ENCODE measurements at regions of chr1 and their contacts with region 1.

Region 1: GRCh38 chr1:40267767-40268187 is 9.7 kb downstream of the ZMPSTE24 start:
- DNase-seq: no peak
- H3K4me3 Mint-ChIP-seq: no peak overlapping the region
- H3K27ac Mint-ChIP-seq: no peak overlapping the region
- H3K4me1 Mint-ChIP-seq: peaks cover 44% of the 10 kb centered on the region
- H3K27me3 Mint-ChIP-seq: no peaks in the 10 kb centered on the region

Region 2: GRCh38 chr1:40185951-40186864 is 81.6 kb before region 1 on chr1:
- intact Hi-C with region 1: loop called (anchors 5 kb)
- DNase-seq: peak; percentile 51
- H3K4me3 Mint-ChIP-seq: peak overlapping the region; percentile 9
- H3K27ac Mint-ChIP-seq: peak overlapping the region; percentile 75
- H3K4me1 Mint-ChIP-seq: peaks cover 63% of the 10 kb centered on the region
- H3K27me3 Mint-ChIP-seq: no peaks in the 10 kb centered on the region

Region 3: DNA sequence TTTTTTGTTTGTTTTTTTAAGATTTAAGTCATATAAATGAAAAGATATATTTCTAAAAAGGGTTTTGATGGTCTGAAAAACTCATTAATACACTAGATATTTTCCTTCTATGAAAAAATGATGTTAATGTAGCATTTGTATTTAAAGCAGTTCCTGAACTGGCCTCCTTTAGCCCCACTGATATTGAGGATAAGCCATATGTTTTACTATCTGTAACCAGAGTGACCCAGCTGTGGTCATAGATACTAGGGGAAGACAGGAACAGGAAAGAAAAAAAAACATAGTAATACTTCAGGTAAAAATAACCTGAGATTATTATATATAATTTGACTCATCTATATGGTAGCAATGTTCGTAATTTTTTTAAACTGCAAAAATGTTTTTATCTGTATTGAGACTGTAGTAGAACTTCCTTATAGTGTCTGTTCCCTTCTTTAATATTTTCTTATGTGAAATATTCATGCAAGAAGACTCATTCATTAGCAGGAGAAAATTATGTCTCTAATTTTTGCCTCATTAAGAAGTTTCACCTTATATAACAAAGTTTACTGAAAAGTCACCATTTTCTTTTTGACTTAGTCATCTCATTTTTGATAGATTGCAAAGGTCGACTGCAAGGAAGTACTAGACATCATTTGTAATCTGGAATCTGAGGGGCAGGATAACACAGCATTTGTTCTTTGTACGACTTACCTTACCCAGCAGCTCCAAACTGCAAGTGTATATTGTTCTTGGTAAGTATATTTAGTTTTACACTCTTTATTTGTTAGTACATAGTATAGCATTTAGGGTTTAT is 45.6 kb before region 1 on chr1:
- intact Hi-C with region 1: loop called (anchors 2 kb)
- DNase-seq: no peak
- H3K4me3 Mint-ChIP-seq: no peak overlapping the region
- H3K27ac Mint-ChIP-seq: no peak overlapping the region
- H3K4me1 Mint-ChIP-seq: peaks cover 27% of the 10 kb centered on the region
- H3K27me3 Mint-ChIP-seq: no peaks in the 10 kb centered on the region

Region 4: DNA sequence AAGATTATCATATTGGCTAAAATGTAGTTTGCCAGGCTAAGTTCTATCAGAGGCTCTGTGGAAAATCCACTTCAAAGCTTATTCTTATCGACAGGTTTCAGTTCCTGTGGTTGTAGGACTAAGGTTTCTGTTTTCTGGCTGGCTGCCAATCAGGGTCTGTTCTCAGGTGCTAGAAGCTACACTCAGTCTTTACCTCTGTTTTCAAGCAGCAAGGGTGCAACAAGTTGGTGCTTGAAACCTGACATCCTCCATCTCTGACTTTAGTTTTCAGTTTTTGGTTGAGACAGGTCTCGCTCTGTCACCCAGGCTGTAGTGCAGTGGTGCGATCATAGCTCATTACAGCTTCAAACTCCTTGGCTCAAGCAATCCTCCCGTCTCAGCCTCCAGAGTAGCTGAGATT is 35.3 kb before region 1 on chr1:
- intact Hi-C with region 1: loop called (anchors 1 kb)
- DNase-seq: peak; percentile 80
- H3K4me3 Mint-ChIP-seq: no peak overlapping the region
- H3K27ac Mint-ChIP-seq: peak overlapping the region; percentile 58
- H3K4me1 Mint-ChIP-seq: peaks cover 44% of the 10 kb centered on the region
- H3K27me3 Mint-ChIP-seq: no peaks in the 10 kb centered on the region

Region 5: DNA sequence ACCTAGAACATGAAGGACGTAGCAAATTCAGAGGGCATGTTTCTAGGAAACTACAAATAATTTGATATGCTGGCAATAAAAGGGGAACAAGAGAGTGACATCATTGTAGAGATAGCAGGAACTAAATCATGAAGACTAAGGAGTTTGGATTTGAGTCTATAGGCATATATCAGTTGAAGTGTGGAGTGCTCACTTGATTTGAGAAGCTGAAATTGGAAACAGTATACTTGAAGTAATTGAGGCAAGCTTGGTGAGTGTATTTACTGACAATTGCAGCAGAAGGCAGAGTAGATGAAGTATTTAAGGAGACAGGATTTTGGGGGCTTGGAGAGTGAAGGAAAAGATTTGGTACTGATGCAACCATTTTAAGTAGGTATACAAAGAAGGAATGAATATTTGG is 26.4 kb before region 1 on chr1:
- intact Hi-C with region 1: loop called (anchors 1 kb)
- DNase-seq: no peak
- H3K4me3 Mint-ChIP-seq: peak overlapping the region; percentile 59
- H3K27ac Mint-ChIP-seq: peak overlapping the region; percentile 83
- H3K4me1 Mint-ChIP-seq: peaks cover 59% of the 10 kb centered on the region
- H3K27me3 Mint-ChIP-seq: no peaks in the 10 kb centered on the region

Region 6: GRCh38 chr1:40252601-40253000 is 15.2 kb before region 1 on chr1:
- intact Hi-C with region 1: no loop called
- DNase-seq: no peak
- H3K4me3 Mint-ChIP-seq: no peak overlapping the region
- H3K27ac Mint-ChIP-seq: no peak overlapping the region
- H3K4me1 Mint-ChIP-seq: peaks cover 29% of the 10 kb centered on the region
- H3K27me3 Mint-ChIP-seq: no peaks in the 10 kb centered on the region

Region 7: GRCh38 chr1:40281853-40282252 is 14.1 kb after region 1 on chr1:
- intact Hi-C with region 1: no loop called
- DNase-seq: no peak
- H3K4me3 Mint-ChIP-seq: no peak overlapping the region
- H3K27ac Mint-ChIP-seq: peak overlapping the region; percentile 71
- H3K4me1 Mint-ChIP-seq: no peaks in the 10 kb centered on the region
- H3K27me3 Mint-ChIP-seq: no peaks in the 10 kb centered on the region

Region 8: DNA sequence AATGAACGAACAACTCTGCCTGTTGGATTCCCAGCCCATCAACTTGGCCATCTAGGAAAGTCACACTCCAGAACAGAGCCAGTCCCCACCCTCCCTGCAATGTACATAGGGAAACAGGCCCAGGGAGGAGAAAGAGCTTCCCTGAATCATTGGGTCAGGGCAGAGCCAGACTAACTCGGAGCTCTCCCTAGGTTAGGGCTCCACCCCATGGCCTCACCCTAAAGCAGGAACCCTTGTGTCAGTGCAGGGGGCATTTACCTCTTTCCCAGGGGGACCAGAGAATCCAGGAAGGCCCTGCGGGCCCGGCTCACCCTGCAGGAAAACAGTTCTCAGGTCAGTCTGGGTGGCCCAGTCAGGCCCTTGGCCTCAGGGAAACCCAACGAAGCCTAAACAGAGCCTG is 37.7 kb after region 1 on chr1:
- intact Hi-C with region 1: no loop called
- DNase-seq: no peak
- H3K4me3 Mint-ChIP-seq: no peak overlapping the region
- H3K27ac Mint-ChIP-seq: no peak overlapping the region
- H3K4me1 Mint-ChIP-seq: no peaks in the 10 kb centered on the region
- H3K27me3 Mint-ChIP-seq: no peaks in the 10 kb centered on the region

Region 9: DNA sequence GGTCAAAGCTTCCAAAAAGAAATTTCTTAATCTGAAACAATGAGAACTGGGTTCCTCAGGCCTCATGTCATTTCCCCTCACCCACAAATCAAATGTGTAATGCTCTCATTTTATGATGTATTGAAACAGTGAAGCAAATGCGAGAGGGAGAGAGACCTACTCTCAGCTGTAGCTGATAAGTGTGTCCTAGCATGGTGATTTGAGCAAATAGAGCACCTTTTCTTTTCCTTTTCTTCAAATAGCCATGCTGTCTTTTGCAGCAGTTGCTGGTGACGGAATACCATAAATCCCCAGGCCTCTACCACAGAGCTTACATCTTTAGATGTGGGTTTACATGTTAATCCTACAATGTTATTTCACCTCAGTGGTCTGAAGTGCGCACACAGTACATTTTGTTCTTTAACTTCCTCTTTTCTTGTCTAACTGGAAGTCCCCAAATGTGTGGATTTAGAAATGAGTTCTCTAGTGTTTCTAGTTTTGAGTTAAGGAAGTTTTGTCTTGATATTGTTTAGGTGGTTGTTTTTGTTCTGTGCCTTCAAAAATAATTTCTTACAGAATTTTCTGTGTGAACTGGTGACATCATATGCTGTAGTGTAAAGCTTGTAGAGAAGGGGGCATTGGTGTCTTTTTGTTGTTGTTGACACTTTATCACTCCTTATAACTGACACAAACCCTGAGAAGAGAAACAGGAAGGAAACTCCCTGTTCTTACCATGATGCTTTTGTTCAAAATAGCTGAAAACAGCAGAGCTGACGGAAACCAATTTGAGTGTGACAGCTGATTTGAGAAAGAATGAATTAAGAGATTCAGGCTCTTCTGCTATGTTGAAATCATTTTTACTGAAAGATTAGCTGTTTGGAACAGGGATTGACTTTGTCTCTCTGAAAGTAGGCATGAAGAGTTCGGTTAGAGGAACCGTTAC is 117.9 kb after region 1 on chr1:
- intact Hi-C with region 1: loop called (anchors 2 kb)
- DNase-seq: peak; percentile 59
- H3K4me3 Mint-ChIP-seq: peak overlapping the region; percentile 85
- H3K27ac Mint-ChIP-seq: peak overlapping the region; percentile 99
- H3K4me1 Mint-ChIP-seq: peaks cover 86% of the 10 kb centered on the region
- H3K27me3 Mint-ChIP-seq: no peaks in the 10 kb centered on the region

Measured in activated T-helper 2 cell treated with anti-CD3 and anti-CD28 coated beads, Interferon-gamma antibody, Interleukin-2, Interleukin-4, amounts not matched to agents 10 μg/mL and 5 μg/mL and 100 μg/mL, durations not matched to agents 14 hours and 24 hours and 36 hours (primary cell).